ENCODE measurements at regions of chr5 and their contacts with region 1.

Region 1: DNA sequence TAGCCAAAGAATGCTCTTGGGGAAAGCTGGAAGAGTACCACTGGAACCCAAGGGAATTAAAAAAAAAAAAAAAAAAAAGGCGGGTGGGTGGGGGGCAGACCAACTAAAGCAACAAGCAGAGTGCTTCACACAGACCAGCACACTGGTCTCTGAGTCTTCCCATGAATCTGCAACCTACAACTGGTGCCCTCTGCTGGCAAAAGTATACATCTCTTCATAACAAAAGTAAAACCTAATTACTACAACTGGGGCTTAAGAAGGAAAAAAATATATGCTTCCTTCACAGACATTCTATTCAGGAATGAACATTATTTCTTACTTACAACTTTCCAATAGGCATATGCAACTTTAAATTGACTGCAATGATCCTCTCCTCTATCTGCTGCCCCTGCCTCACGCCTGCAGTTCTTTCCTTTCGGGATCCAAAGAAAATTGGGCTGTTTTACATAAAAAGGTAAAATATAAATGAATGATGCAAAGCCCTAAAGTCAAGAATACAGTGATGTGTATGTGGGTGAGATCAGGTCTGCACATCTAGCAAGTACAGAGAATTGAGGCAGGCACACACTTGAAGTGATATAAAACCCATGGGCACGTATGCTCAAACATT is 7.2 kb upstream of the KLHL3 start:
- DNase-seq: peak; percentile 84
- H3K4me3 Mint-ChIP-seq: no peak overlapping the region
- H3K27ac Mint-ChIP-seq: no peak overlapping the region
- H3K4me1 Mint-ChIP-seq: peaks cover 19% of the 10 kb centered on the region
- H3K27me3 Mint-ChIP-seq: no peaks in the 10 kb centered on the region

Region 2: DNA sequence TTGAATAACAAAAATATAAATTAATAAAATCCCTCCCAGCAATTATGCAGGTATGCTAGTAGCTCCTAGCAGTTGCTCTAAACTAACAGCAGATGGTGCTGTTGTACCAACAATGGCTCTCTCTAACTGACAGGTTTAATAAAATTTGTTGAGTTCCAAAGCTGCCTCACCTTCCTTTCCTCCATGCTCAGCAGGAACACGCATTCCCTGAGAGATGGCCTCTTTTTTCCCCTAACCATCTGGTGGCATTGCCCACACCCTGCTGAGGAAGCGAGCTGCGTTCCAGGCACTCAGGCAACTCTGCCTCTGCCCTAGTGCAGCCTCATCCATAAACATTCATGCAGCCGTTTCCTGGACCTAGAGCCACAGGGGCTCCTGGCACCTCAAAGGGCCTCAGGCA is 113.5 kb before region 1 on chr5:
- CTCF ChIA-PET with region 1: interaction called, 12 read pairs
- POLR2A ChIA-PET with region 1: no interaction called
- DNase-seq: peak; percentile 46
- H3K4me3 Mint-ChIP-seq: no peak overlapping the region
- H3K27ac Mint-ChIP-seq: peak overlapping the region; percentile 48
- H3K4me1 Mint-ChIP-seq: no peaks in the 10 kb centered on the region
- H3K27me3 Mint-ChIP-seq: no peaks in the 10 kb centered on the region

Region 3: GRCh38 chr5:137660349-137660817 is 82.8 kb before region 1 on chr5:
- CTCF ChIA-PET with region 1: interaction called, 52 read pairs
- POLR2A ChIA-PET with region 1: interaction called, 10 read pairs
- DNase-seq: peak; percentile 82
- H3K4me3 Mint-ChIP-seq: no peak overlapping the region
- H3K27ac Mint-ChIP-seq: no peak overlapping the region
- H3K4me1 Mint-ChIP-seq: peaks cover 23% of the 10 kb centered on the region
- H3K27me3 Mint-ChIP-seq: no peaks in the 10 kb centered on the region

Region 4: GRCh38 chr5:137665678-137666460 is 77.3 kb before region 1 on chr5:
- CTCF ChIA-PET with region 1: interaction called, 52 read pairs
- POLR2A ChIA-PET with region 1: interaction called, 10 read pairs
- DNase-seq: peak; percentile 73
- H3K4me3 Mint-ChIP-seq: no peak overlapping the region
- H3K27ac Mint-ChIP-seq: peak overlapping the region; percentile 74
- H3K4me1 Mint-ChIP-seq: peaks cover 41% of the 10 kb centered on the region
- H3K27me3 Mint-ChIP-seq: no peaks in the 10 kb centered on the region

Region 5: GRCh38 chr5:137718611-137719010 is 24.5 kb before region 1 on chr5:
- CTCF ChIA-PET with region 1: interaction called, 12 read pairs
- POLR2A ChIA-PET with region 1: no interaction called
- DNase-seq: no peak
- H3K4me3 Mint-ChIP-seq: no peak overlapping the region
- H3K27ac Mint-ChIP-seq: no peak overlapping the region
- H3K4me1 Mint-ChIP-seq: peaks cover 10% of the 10 kb centered on the region
- H3K27me3 Mint-ChIP-seq: no peaks in the 10 kb centered on the region

Region 6: DNA sequence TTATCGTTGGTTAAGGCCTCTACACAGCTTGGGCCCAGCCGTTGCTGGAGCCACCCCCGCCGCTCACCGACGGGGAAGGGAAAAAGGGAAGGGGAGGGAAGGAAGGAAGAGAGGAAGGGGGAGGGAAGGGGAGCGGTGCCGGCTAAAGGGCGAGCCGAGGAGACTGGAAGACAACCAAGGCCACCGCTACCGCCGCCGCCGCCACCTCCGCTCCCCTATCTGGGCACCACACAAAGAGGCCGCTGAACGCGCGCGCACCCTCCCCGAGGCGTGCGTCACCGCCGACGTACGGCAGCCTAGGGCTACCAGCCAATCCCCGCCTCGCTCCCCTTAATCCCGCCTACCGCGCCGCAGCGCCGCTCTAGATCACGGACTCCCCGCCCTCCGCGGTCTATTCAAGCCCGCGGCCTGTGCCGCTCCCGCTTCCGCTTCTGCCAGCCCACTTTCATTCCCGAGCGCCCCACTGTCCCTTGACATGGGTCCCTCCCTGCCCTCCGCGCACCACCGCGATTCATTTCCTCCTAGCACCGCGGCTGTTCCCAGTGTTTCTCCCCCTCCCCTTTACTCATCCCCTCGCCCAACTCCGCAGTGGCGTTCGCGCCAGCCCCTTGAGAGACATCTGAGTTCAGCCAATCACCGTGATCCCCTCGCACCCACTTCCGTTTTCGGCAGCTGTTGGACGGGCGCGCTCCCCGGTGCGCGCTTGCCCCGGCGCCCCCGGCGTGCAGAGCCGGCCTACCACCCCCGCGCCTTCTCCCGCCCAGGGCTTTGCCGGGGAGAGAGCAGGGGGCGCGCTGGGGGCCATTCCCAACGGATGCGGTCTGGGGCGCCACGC is 11.2 kb after region 1 on chr5 and contains the start of gene HNRNPA0:
- CTCF ChIA-PET with region 1: interaction called, 21 read pairs
- POLR2A ChIA-PET with region 1: interaction called, 4 read pairs
- DNase-seq: peak; percentile 96
- H3K4me3 Mint-ChIP-seq: peak within 1 kb of the TSS; percentile 95
- H3K27ac Mint-ChIP-seq: peak within 1 kb of the TSS; percentile 100
- H3K4me1 Mint-ChIP-seq: peaks cover 27% of the 10 kb centered on the region
- H3K27me3 Mint-ChIP-seq: no peaks in the 10 kb centered on the region
- total RNA-seq, gene HNRNPA0: 26.0 to 31.8 TPM

Region 7: GRCh38 chr5:137792303-137792702 is 49.2 kb after region 1 on chr5:
- CTCF ChIA-PET with region 1: no interaction called
- POLR2A ChIA-PET with region 1: no interaction called
- DNase-seq: no peak
- H3K4me3 Mint-ChIP-seq: no peak overlapping the region
- H3K27ac Mint-ChIP-seq: no peak overlapping the region
- H3K4me1 Mint-ChIP-seq: no peaks in the 10 kb centered on the region
- H3K27me3 Mint-ChIP-seq: no peaks in the 10 kb centered on the region

Region 8: DNA sequence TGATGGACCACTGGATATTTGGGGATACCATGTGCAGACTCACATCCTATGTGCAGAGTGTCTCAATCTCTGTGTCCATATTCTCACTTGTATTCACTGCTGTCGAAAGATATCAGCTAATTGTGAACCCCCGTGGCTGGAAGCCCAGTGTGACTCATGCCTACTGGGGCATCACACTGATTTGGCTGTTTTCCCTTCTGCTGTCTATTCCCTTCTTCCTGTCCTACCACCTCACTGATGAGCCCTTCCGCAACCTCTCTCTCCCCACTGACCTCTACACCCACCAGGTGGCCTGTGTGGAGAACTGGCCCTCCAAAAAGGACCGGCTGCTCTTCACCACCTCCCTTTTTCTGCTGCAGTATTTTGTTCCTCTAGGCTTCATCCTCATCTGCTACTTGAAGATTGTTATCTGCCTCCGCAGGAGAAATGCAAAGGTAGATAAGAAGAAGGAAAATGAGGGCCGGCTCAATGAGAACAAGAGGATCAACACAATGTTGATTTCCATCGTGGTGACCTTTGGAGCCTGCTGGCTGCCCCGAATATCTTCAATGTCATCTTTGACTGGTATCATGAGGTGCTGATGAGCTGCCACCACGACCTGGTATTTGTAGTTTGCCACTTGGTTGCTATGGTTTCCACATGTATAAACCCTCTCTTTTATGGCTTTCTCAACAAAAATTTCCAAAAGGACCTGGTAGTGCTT is 65.5 kb after region 1 on chr5:
- CTCF ChIA-PET with region 1: no interaction called
- POLR2A ChIA-PET with region 1: no interaction called
- DNase-seq: no peak
- H3K4me3 Mint-ChIP-seq: no peak overlapping the region
- H3K27ac Mint-ChIP-seq: no peak overlapping the region
- H3K4me1 Mint-ChIP-seq: no peaks in the 10 kb centered on the region
- H3K27me3 Mint-ChIP-seq: no peaks in the 10 kb centered on the region